Panc1 (cell line): ENCODE measurements at regions of chr7 and their contacts with region 1.

Region 1: DNA sequence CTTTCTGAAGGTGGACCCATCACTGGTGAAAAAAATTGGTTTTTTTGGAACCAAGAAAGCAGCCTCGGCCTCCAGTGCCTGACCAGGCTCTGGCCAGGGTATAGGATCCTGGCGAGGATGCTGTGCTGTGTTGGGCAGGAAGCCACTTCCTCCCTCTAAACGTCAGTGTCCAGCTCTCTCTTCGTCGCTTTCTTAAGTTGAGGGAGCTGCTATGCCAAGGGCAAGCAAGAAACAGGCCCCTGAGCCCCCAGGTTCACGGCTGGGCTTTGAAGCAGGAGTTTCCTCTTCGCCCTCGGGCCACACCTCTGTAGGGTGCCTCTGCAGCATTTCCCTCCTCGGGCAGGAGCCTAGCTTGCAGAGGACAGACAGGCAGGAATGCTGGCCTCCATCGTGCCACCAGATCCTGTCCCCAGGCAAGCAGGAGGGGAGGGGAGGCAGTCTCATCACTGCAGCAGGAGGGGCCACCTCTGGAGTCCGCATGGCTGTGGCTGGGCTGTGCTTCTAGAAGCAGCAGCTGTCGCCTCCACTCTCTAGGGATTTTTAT is 181.3 kb downstream of the CUX1 start:
- DNase-seq: no peak
- ATAC-seq: no peak; the same call in 1 of the 2 replicates
- H3K4me3 ChIP-seq: no peak overlapping the region
- H3K27ac ChIP-seq: no peak overlapping the region
- H3K4me1 ChIP-seq: 0 out of 2 replicates have a peak, but pooled peaks cover 2% of the 10 kb centered on the region
- H3K27me3 ChIP-seq: no peaks in the 10 kb centered on the region
- CTCF ChIP-seq: no peak

Region 2: GRCh38 chr7:102008535-102009345 is 10.0 kb after region 1 on chr7:
- CTCF ChIA-PET with region 1: no interaction called
- POLR2A ChIA-PET with region 1: no interaction called
- in situ Hi-C with region 1: no loop called
- intact Hi-C with region 1: no loop called
- DNase-seq: no peak
- ATAC-seq: no peak
- H3K4me3 ChIP-seq: no peak overlapping the region
- H3K27ac ChIP-seq: no peak overlapping the region
- H3K4me1 ChIP-seq: no peaks in the 10 kb centered on the region
- H3K27me3 ChIP-seq: no peaks in the 10 kb centered on the region
- CTCF ChIP-seq: no peak

Region 3: GRCh38 chr7:102153586-102153946 is 154.8 kb after region 1 on chr7:
- CTCF ChIA-PET with region 1: interaction called, 10 read pairs
- POLR2A ChIA-PET with region 1: no interaction called
- in situ Hi-C with region 1: no loop called
- intact Hi-C with region 1: no loop called
- DNase-seq: no peak
- ATAC-seq: no peak
- H3K4me3 ChIP-seq: no peak overlapping the region
- H3K27ac ChIP-seq: no peak overlapping the region
- H3K4me1 ChIP-seq: no peaks in the 10 kb centered on the region
- H3K27me3 ChIP-seq: no peaks in the 10 kb centered on the region
- CTCF ChIP-seq: no peak

Region 4: GRCh38 chr7:102258749-102259107 is 260.0 kb after region 1 on chr7:
- CTCF ChIA-PET with region 1: no interaction called
- POLR2A ChIA-PET with region 1: no interaction called
- in situ Hi-C with region 1: no loop called
- intact Hi-C with region 1: no loop called
- DNase-seq: no peak
- ATAC-seq: no peak
- H3K4me3 ChIP-seq: no peak overlapping the region
- H3K27ac ChIP-seq: no peak overlapping the region
- H3K4me1 ChIP-seq: no peaks in the 10 kb centered on the region
- H3K27me3 ChIP-seq: no peaks in the 10 kb centered on the region
- CTCF ChIP-seq: no peak